Activated CD4-positive, alpha-beta T cell treated with anti-CD3 and anti-CD28 coated beads for 36 hours (primary cell): ENCODE measurements at regions of chr12 and their contacts with region 1.

Region 1: DNA sequence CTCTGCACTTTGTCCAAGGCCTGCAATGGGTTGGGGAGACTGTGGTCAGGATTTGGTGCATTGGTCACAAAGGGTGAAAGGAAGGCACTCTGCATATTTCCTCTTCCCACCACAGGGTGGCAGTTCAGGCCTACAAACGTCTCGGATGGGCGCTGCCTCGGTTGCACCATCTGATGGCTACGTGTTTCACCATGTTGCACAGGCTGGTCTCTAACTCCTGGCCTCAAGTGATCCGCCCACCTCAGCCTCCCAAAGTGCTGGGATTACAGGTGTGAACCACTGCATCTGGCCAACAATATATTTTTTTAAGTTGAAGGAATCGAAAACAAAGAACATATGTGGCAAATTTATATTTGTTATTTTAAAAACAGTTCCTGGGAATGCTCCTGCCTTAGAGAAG is 35.1 kb downstream of the TMBIM6 start:
- DNase-seq: peak; percentile 84
- ATAC-seq: peak; percentile 93
- H3K4me3 Mint-ChIP-seq: no peak overlapping the region
- H3K27ac Mint-ChIP-seq: no peak overlapping the region
- H3K4me1 Mint-ChIP-seq: peaks cover 14% of the 10 kb centered on the region
- H3K27me3 Mint-ChIP-seq: peaks cover 10% of the 10 kb centered on the region

Region 2: GRCh38 chr12:49644620-49644994 is 131.8 kb before region 1 on chr12:
- CTCF ChIA-PET with region 1: interaction called, 6 read pairs
- POLR2A ChIA-PET with region 1: no interaction called
- intact Hi-C with region 1: loop called in 1 of 2 experiments (anchors 1 kb)
- DNase-seq: peak; percentile 89
- ATAC-seq: peak; percentile 93
- H3K4me3 Mint-ChIP-seq: no peak overlapping the region
- H3K27ac Mint-ChIP-seq: peak overlapping the region; percentile 78
- H3K4me1 Mint-ChIP-seq: peaks cover 18% of the 10 kb centered on the region
- H3K27me3 Mint-ChIP-seq: no peaks in the 10 kb centered on the region

Region 3: DNA sequence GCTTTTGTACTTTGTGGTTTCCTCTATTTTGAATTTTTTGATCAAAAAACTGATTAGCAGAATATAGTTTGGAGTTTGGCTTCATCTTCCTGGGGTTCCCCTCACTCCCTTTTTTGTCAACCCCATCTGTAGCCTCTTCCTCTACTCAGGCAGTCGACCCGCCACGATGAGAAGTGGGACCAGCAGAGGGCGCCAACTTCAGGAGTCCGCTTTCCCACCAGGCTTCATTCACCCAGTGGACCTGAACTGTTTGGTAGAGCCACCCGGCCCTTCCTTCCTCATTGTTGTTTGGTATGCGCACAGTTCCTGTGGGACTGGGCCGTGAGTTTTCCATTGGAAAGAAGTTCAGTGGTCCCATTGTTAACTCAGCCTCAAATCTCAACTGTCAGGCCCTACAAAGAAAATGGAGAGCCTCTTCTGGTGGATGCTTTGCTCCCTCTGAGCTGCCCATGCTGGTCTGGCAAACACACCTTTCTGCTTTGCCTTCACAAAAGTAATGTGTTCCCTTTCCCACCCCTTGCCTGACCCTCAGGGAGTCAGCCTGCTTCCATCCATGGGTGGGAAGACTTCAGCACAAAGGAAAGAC is 13.3 kb before region 1 on chr12:
- CTCF ChIA-PET with region 1: interaction called, 36 read pairs
- POLR2A ChIA-PET with region 1: no interaction called
- intact Hi-C with region 1: no loop called
- DNase-seq: peak; percentile 89
- ATAC-seq: peak; percentile 59
- H3K4me3 Mint-ChIP-seq: peak overlapping the region; percentile 24
- H3K27ac Mint-ChIP-seq: peak overlapping the region; percentile 77
- H3K4me1 Mint-ChIP-seq: peaks cover 62% of the 10 kb centered on the region
- H3K27me3 Mint-ChIP-seq: no peaks in the 10 kb centered on the region

Region 4: GRCh38 chr12:49809906-49810389 is 33.5 kb after region 1 on chr12:
- CTCF ChIA-PET with region 1: interaction called, 11 read pairs
- POLR2A ChIA-PET with region 1: no interaction called
- intact Hi-C with region 1: no loop called
- DNase-seq: no peak
- ATAC-seq: no peak
- H3K4me3 Mint-ChIP-seq: no peak overlapping the region
- H3K27ac Mint-ChIP-seq: no peak overlapping the region
- H3K4me1 Mint-ChIP-seq: peaks cover 3% of the 10 kb centered on the region
- H3K27me3 Mint-ChIP-seq: no peaks in the 10 kb centered on the region

Region 5: DNA sequence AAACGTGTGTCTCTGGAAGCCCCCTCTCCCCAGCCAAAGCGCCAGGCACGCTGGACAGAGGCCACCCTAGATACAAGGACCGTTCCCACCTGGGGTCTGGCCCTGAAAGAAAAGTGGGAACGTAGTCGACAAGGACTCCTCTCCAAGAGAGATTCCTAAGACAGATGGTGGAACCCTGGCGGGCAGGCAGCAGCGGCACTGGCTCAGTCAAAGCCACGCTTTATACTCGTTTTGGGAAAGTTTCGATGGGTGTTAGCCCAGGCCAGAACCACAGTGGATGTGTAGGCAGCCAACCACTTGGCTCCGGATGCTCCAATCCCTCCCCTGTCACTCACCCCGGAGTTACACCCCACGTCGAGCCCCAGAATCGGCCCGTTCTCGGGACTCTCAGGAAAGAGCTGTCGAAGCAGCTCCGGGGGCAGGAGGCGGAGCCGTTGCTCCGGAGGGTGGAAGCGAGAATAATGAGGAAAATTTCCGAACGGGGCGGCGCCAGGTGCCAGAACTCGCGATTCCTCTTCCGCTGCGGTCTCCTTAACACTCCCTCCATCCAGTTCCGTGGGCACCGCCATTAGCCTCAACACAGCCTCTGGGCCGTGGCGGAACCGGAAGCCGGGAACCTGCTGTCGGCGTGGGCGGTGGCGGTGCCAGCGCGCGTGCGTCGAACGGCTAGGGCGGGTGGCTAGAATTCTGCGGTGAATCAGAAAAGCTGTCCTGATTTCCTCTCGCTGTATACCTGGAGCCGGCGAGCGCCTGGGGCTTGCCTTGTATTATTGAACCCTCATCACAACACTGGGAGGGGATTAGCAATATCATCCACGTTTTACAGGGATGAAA is 66.3 kb after region 1 on chr12 and contains the start of gene BCDIN3D:
- CTCF ChIA-PET with region 1: interaction called, 19 read pairs
- POLR2A ChIA-PET with region 1: no interaction called
- intact Hi-C with region 1: loop called (anchors 1 kb)
- DNase-seq: peak; percentile 97
- ATAC-seq: peak; percentile 92
- H3K4me3 Mint-ChIP-seq: peak within 1 kb of the TSS; percentile 90
- H3K27ac Mint-ChIP-seq: peak within 1 kb of the TSS; percentile 91
- H3K4me1 Mint-ChIP-seq: peaks cover 30% of the 10 kb centered on the region
- H3K27me3 Mint-ChIP-seq: no peaks in the 10 kb centered on the region
- total RNA-seq, gene BCDIN3D: 5.5 to 5.6 TPM

Region 6: DNA sequence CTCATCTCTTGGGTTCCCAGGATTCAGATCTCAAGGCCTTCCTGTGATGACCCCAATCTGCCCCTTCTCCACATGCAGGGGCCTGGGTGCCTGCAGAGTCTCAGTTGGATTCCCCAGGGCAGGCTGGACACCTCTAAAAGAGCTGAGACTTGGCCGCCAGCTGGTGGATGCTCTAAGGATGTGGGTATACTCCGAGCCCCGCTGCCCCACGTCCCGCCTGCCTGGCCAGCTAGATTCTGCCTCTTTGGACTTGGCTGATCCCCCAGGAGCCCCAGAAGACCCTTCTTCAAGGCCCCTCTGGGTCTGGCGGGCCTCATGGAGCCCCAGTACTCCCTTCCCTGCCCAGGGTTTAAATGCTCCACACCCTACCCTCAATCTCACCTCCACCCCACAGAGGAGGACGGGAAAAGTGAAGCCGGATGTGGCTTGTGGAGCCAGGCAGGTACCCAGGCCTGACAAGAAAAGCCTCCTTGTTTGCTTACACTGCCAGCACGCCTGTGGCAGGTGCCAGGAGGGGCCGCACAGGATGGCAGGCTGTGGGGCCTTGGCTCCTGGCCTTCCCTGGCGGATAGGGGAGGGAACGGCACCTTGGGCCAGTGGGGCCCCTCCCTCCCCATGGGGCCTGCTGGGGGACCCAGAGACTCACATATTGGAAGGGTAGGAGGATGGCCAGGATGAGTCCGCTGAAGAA is 112.2 kb after region 1 on chr12:
- CTCF ChIA-PET with region 1: no interaction called
- POLR2A ChIA-PET with region 1: no interaction called
- intact Hi-C with region 1: no loop called
- DNase-seq: no peak
- ATAC-seq: no peak
- H3K4me3 Mint-ChIP-seq: no peak overlapping the region
- H3K27ac Mint-ChIP-seq: no peak overlapping the region
- H3K4me1 Mint-ChIP-seq: no peaks in the 10 kb centered on the region
- H3K27me3 Mint-ChIP-seq: no peaks in the 10 kb centered on the region

Region 7: GRCh38 chr12:49945394-49946080 is 169.1 kb after region 1 on chr12:
- CTCF ChIA-PET with region 1: interaction called, 6 read pairs
- POLR2A ChIA-PET with region 1: no interaction called
- intact Hi-C with region 1: loop called in 1 of 2 experiments (anchors 5 kb)
- DNase-seq: peak; percentile 94
- ATAC-seq: peak; percentile 100
- H3K4me3 Mint-ChIP-seq: peak overlapping the region; percentile 74
- H3K27ac Mint-ChIP-seq: peak overlapping the region; percentile 95
- H3K4me1 Mint-ChIP-seq: peaks cover 19% of the 10 kb centered on the region
- H3K27me3 Mint-ChIP-seq: no peaks in the 10 kb centered on the region